Activated CD4-positive, alpha-beta T cell treated with anti-CD3 and anti-CD28 coated beads, Interleukin-2, amount 10 ng/mL, durations not matched to agents 24 days and 14 days (primary cell): ENCODE measurements at regions of chrX and their contacts with region 1.

Region 1: GRCh38 chrX:78555401-78555980 is 103.6 kb downstream of the RTL3 start:
- DNase-seq: no peak
- H3K4me3 Mint-ChIP-seq: no peak overlapping the region
- H3K27ac Mint-ChIP-seq: no peak overlapping the region
- H3K4me1 Mint-ChIP-seq: peaks cover 5% of the 10 kb centered on the region
- H3K27me3 Mint-ChIP-seq: no peaks in the 10 kb centered on the region

Region 2: DNA sequence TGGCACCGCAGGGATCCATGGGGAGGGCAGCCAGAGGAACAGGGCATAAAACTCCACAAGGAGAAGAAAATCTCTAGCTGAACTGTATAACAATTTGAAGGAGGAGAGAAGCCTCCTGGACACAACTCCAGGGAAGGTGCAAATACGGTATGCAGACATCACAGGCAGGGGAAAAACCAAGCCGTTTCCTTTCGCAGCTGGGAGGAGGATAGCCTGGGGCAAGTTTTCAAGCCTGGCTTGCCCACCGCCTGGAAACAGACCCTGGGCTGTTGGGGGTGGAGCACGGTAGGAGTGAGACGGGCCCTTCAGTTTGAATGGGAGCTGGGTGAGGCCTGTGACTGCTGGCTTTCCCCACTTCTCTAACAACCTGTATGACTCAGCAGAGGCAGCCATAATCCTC is 372.6 kb before region 1 on chrX:
- intact Hi-C with region 1: no loop called
- DNase-seq: no peak
- H3K4me3 Mint-ChIP-seq: no peak overlapping the region
- H3K27ac Mint-ChIP-seq: no peak overlapping the region
- H3K4me1 Mint-ChIP-seq: no peaks in the 10 kb centered on the region
- H3K27me3 Mint-ChIP-seq: peaks cover 2% of the 10 kb centered on the region

Region 3: DNA sequence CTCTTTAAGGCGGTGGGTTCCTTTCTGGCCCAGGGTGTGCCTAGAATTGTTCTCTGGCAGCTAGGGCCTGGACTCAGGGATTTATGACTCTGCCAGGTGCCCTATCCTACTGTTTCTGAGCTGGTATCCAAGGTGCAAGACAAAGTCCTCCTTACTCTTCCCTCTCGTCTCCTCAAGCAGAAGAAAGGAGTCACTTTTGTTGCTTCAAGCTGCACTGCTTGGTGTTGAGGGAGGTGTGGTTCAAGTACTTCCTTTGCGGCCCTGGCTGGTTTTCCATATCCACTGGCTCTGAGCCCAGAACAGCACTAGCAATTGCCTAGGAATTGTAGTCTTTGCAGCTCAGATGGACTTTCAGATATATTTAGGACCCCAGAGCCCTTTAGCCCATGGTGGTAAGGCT is 64.3 kb after region 1 on chrX:
- intact Hi-C with region 1: no loop called
- DNase-seq: no peak
- H3K4me3 Mint-ChIP-seq: no peak overlapping the region
- H3K27ac Mint-ChIP-seq: no peak overlapping the region
- H3K4me1 Mint-ChIP-seq: no peaks in the 10 kb centered on the region
- H3K27me3 Mint-ChIP-seq: no peaks in the 10 kb centered on the region

Region 4: DNA sequence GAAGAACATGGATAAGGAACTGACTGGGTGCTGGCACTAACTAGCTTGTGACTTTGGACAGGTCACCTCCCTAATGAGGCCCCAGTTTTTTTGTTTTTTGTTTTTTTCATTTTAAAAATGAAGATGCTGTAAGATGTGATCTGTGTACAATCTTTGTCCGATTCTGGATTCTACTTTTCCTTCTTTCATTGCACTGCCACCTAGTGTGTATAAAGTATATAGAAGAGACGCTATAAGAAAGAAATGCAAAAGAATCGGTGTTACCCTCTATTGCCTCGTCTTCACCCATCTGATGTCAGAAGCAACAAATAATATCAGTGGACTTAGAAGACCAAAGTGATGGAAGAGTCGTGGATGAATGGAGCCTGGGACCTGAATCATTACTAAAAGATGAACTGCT is 331.1 kb after region 1 on chrX:
- intact Hi-C with region 1: loop called (anchors 2 kb)
- DNase-seq: no peak
- H3K4me3 Mint-ChIP-seq: no peak overlapping the region
- H3K27ac Mint-ChIP-seq: no peak overlapping the region
- H3K4me1 Mint-ChIP-seq: peaks cover 7% of the 10 kb centered on the region
- H3K27me3 Mint-ChIP-seq: no peaks in the 10 kb centered on the region

Region 5: DNA sequence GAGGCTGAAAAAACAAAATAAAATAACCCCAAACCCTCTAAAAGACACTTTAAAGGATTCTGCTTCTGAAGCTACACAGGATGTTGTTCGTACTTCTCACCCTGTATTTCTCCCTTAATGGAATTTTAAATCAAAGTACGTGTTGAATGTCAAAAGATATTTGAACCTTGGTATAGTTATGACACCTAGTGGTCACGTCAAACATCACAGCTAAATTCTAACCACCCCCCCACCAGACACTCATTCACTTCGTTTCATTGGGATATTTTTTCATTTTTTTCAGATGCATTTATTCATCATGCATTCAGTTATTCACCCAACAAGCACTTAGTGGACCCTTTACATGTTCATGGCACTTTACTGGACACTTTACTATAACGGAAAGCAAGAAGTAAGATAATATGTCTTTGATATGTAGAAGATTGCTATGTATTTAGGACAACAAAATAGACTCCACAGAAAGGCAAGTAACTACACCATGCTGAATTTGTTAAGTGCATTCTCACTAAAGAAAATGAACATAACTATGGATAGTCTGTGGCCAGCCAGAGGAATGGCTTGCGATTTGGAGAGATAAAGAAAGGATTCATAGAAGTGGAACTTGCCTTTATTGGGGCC is 526.5 kb after region 1 on chrX:
- intact Hi-C with region 1: loop called (anchors 1 kb)
- DNase-seq: peak; percentile 78
- H3K4me3 Mint-ChIP-seq: peak overlapping the region; percentile 78
- H3K27ac Mint-ChIP-seq: peak overlapping the region; percentile 87
- H3K4me1 Mint-ChIP-seq: peaks cover 14% of the 10 kb centered on the region
- H3K27me3 Mint-ChIP-seq: no peaks in the 10 kb centered on the region

Region 6: GRCh38 chrX:79412972-79413371 is 857.5 kb after region 1 on chrX:
- intact Hi-C with region 1: loop called (anchors 1 kb)
- DNase-seq: no peak
- H3K4me3 Mint-ChIP-seq: peak overlapping the region; percentile 69
- H3K27ac Mint-ChIP-seq: peak overlapping the region; percentile 53
- H3K4me1 Mint-ChIP-seq: peaks cover 18% of the 10 kb centered on the region
- H3K27me3 Mint-ChIP-seq: no peaks in the 10 kb centered on the region

Region 7: DNA sequence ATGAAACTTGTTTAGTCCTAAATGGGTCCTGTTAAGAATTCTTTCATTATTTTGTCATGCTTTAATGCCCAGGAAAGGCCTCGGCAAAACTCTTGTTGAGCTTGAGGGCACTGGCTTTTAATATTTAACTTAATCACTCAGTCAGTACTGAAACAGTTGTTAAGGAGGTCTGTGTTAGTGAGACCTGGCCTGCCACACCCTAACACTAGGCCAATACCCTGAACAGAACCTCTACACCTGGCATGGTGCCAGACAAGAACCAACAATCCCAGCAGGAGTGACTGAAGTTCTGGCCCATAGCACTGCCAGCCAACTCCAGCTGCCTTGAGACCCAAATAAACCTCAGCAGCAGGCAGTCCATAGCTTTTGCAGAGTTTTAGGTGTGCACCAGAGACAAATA is 897.4 kb after region 1 on chrX:
- intact Hi-C with region 1: loop called (anchors 5 kb)
- DNase-seq: no peak
- H3K4me3 Mint-ChIP-seq: no peak overlapping the region
- H3K27ac Mint-ChIP-seq: no peak overlapping the region
- H3K4me1 Mint-ChIP-seq: peaks cover 7% of the 10 kb centered on the region
- H3K27me3 Mint-ChIP-seq: no peaks in the 10 kb centered on the region